Activated B cell treated with CpG ODN at 0.5 μM for 24 hours (primary cell): ENCODE measurements at regions of chr2 and their contacts with region 1.

Region 1: DNA sequence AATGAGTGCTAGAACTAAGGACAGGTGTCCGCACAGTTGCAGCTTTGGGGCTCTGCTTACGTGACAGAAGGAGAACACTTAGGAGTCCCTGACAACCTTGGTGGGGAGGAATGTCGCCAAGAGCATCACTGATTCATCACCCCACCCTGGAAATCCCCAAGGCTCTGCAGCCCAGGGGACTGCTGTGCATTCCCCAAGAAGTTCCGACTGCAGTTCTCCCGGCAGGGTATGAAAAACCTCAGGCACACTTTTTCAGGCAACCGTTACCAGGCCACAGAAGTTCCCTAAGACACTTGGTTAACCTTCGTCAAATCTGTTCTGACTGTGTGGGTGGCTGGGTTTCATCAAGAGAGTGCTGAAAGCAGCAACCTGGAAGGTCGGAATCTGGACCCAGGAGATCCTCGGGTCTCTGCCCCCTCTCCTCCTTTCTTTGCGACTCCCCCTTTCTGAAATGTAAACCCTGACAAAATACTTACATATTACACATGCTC is 192.1 kb upstream of the CXCR4 start:
- DNase-seq: no peak
- ATAC-seq: peak; percentile 16
- H3K4me3 Mint-ChIP-seq: peak overlapping the region; percentile 1
- H3K27ac Mint-ChIP-seq: peak overlapping the region; percentile 4
- H3K4me1 Mint-ChIP-seq: peaks cover 30% of the 10 kb centered on the region
- H3K27me3 Mint-ChIP-seq: no peaks in the 10 kb centered on the region
- CTCF ChIP-seq: no peak

Region 2: GRCh38 chr2:136112317-136113208 is 197.5 kb before region 1 on chr2:
- CTCF ChIA-PET with region 1: no interaction called
- POLR2A ChIA-PET with region 1: interaction called, 3 read pairs
- intact Hi-C with region 1: loop called (anchors 1 kb)
- DNase-seq: no peak
- ATAC-seq: no peak
- H3K4me3 Mint-ChIP-seq: peak overlapping the region; percentile 96
- H3K27ac Mint-ChIP-seq: peak overlapping the region; percentile 24
- H3K4me1 Mint-ChIP-seq: peaks cover 83% of the 10 kb centered on the region
- H3K27me3 Mint-ChIP-seq: no peaks in the 10 kb centered on the region
- CTCF ChIP-seq: no peak

Region 3: GRCh38 chr2:136327162-136327852 is 17.3 kb after region 1 on chr2:
- CTCF ChIA-PET with region 1: no interaction called
- POLR2A ChIA-PET with region 1: interaction called, 14 read pairs
- intact Hi-C with region 1: loop called (anchors 2 kb)
- DNase-seq: no peak
- ATAC-seq: peak; percentile 78
- H3K4me3 Mint-ChIP-seq: peak overlapping the region; percentile 60
- H3K27ac Mint-ChIP-seq: peak overlapping the region; percentile 85
- H3K4me1 Mint-ChIP-seq: peaks cover 56% of the 10 kb centered on the region
- H3K27me3 Mint-ChIP-seq: no peaks in the 10 kb centered on the region
- CTCF ChIP-seq: no peak